Activated naive CD8-positive, alpha-beta T cell treated with anti-CD3 and anti-CD28 coated beads, Interleukin-2, amount 10 ng/mL, durations not matched to agents 7 days and 5 days (primary cell): ENCODE measurements at regions of chr1 and their contacts with region 1.

Region 1: DNA sequence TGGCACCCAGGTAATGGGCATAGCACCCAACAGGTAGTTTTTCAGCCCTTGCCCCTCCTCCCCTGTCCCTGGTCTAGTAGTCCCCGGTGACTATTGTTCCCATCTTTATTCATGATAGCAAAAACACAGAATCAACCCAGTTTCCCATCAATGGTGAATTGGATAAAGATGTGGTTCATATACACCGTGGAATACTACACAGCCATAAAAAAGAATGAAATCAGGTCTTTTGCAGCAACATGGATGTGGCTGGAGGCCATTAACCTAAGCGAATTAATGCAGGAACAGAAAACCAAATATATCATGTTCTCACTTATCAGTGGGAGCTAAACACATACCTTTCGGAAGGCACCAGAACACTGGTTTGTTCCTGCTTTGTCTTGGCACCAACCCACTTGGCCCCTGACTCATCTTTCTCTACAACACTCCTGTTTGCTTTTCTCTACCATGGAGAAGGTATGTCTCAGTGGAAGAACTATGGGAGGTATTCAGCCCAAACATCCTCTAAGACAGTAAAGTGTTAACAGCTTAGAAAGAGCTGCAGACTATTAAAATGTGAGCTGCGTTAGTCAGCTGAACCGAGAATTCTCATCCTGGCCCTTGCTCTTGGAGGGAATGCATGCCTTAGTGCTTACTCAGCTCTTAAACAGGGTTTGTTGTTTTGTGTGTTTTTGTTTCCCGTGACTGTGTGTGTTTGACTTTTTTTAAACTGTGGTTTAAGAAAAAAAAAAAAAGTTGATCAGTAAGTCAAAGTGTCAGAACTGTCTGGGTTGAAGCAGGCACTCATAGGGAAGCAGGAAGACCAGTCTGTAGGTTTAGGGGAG is 203.0 kb downstream of the TOMM20 start:
- DNase-seq: no peak
- ATAC-seq: no peak
- H3K4me3 Mint-ChIP-seq: peak overlapping the region; percentile 68
- H3K27ac Mint-ChIP-seq: peak overlapping the region; percentile 95
- H3K4me1 Mint-ChIP-seq: peaks cover 47% of the 10 kb centered on the region
- H3K27me3 Mint-ChIP-seq: no peaks in the 10 kb centered on the region

Region 2: GRCh38 chr1:234941321-234942011 is 15.8 kb after region 1 on chr1:
- POLR2A ChIA-PET with region 1: no interaction called
- DNase-seq: no peak
- ATAC-seq: no peak
- H3K4me3 Mint-ChIP-seq: no peak overlapping the region
- H3K27ac Mint-ChIP-seq: no peak overlapping the region
- H3K4me1 Mint-ChIP-seq: peaks cover 4% of the 10 kb centered on the region
- H3K27me3 Mint-ChIP-seq: no peaks in the 10 kb centered on the region

Region 3: DNA sequence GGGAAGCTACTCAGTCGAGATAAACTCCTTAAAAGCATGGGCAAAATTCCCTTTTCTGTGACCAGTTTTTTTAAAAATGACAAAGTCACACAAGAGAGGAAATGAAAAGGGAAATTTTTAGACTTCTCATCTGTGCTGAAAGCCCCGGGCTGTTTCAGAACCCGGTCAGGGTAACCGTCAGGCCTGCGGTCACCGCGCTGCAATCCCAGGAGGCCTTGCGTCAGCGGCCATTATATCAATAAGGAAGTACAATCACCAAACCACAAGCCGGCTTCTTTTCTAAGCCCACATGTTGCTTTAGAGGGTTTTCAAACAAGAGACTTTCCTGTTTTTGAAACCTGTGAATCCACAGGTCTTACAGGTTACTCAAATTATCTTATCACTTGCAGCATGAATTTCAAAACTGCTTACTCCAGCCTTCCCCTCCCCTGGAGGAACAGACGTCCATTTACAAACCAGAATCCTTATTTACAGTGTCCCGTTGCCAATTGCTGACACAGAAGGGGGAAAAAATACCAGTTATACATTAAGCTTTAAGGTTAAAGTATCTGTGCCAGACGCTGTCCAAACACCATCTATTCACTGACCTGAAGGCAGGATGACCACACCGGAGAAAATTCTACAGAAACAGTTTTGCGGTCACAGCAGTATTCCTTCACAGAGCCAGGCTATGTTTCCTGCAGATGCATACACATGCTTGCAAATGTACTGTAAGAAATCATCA is 37.7 kb after region 1 on chr1:
- POLR2A ChIA-PET with region 1: interaction called, 18 read pairs
- DNase-seq: peak; percentile 86
- ATAC-seq: peak; percentile 77
- H3K4me3 Mint-ChIP-seq: peak overlapping the region; percentile 71
- H3K27ac Mint-ChIP-seq: peak overlapping the region; percentile 88
- H3K4me1 Mint-ChIP-seq: peaks cover 59% of the 10 kb centered on the region
- H3K27me3 Mint-ChIP-seq: no peaks in the 10 kb centered on the region

Region 4: DNA sequence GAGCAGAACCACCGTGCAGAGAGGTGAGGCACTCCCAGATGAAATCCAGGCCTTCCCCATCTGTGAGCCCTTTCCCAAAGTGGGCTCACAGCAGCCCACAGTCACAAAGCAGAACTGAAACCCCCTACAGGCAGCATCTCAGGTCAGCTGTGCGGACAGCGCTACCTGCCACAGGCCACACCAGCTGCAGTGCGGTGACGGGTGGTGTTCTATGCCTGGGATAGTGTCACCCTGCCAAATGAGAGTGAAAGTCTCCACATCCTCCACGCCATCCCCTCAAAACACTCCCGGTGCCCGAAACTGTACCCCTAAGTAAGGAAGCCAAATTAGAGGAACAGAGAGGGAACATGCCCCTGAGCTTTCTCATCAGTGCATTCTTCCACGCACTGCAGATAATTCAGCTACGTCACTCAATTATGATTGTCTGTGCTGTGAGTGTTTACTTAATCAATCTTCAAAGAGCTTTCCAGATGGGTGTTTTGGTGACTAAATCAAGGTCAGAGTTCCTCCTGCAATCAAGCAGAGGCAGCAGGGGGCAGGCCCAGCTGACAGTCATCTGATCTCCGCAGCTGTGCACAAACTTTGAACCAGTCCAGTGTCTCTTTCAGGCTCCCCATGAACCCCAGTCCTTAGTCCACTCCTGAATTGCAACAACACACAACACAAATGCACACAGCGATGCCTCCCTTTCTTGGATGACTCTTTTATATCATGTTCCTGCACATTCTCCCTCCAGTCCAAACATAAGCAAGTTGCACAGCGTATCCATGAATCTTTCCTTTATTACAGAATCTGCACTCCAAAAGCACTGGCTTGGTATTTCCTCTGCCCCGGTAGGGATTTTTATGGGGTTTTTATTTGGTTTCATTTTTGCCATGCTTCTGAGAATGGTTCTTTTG is 53.0 kb after region 1 on chr1:
- POLR2A ChIA-PET with region 1: interaction called, 21 read pairs
- DNase-seq: no peak
- ATAC-seq: peak; percentile 27
- H3K4me3 Mint-ChIP-seq: peak overlapping the region; percentile 74
- H3K27ac Mint-ChIP-seq: peak overlapping the region; percentile 87
- H3K4me1 Mint-ChIP-seq: peaks cover 56% of the 10 kb centered on the region
- H3K27me3 Mint-ChIP-seq: no peaks in the 10 kb centered on the region

Region 5: DNA sequence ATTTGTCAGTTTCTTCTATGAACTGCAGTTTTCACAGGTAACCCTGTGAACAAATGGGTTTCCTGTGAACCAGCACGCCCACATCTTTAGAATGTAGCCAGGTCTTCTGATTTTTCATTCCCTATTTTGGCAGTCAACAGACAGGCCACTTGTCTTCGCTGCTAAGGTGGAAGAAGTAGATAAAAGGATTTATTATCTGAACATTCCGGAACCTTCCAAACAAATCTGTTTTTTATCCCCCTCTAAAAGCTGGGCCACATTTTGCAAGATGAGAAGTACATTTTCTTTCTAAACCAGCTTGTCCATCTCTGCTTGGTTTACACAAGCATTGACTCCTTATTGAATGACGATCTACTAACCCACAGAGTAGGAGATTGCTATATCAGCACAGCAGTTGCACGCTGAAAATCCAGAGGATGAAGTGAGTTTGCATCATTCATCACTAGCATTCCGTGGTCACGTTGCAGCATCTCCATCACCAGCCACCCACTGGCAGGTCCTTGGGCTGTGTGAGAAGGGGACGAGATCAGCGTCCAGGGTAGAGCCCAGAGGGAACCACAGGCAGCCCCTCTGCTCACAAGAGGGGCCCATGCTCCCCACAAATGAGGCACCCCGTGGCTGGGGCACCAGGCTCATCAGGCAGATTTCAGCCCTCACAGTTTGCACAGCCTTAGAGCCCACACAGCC is 119.5 kb after region 1 on chr1:
- POLR2A ChIA-PET with region 1: no interaction called
- DNase-seq: no peak
- ATAC-seq: no peak
- H3K4me3 Mint-ChIP-seq: no peak overlapping the region
- H3K27ac Mint-ChIP-seq: no peak overlapping the region
- H3K4me1 Mint-ChIP-seq: peaks cover 34% of the 10 kb centered on the region
- H3K27me3 Mint-ChIP-seq: no peaks in the 10 kb centered on the region